GM12878 (cell line): ENCODE measurements at regions of chr12 and their contacts with region 1.

Region 1: DNA sequence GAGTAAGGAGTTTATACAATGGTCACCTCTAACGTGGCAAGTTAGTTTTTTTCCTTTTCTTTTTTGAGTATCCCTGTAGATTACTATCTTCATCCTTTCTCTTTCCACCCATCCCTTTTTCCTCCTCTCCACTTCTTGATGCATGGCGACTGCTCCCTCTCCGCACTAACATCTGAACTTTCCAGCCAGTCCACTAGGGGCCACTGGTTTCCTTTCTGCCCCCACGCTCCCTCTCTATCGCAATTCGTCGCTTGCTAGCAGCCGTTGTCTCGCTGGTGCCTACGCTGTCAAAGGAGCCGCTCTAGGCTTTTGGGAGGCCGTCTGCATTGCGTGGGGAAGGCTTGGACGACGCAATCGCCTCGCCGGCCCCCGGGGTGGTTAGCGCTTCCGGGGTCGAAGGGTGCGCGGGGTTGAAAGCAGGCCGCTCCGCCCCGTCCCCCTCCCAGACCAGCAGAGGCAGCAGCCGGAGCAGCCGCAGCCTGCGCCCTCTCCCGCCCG is at the start of gene PCBP2:
- DNase-seq: peak; percentile 96
- ATAC-seq: peak; percentile 97
- H3K4me3 ChIP-seq: peak within 1 kb of the TSS; percentile 97
- H3K27ac ChIP-seq: peak within 1 kb of the TSS; percentile 92
- H3K4me1 ChIP-seq: peaks cover 5% of the 10 kb centered on the region
- H3K27me3 ChIP-seq: no peaks in the 10 kb centered on the region
- CTCF ChIP-seq: peak; percentile 92 to 97 (median 95)
- EP300 ChIP-seq: peak in 1 of 2 experiments; percentile 21; a peak in 1 of 4 replicates
- POLR2A ChIP-seq: peak; percentile 91
- RAD21 ChIP-seq: no peak
- polyA plus RNA-seq, gene PCBP2: 318 to 348 TPM

Region 2: DNA sequence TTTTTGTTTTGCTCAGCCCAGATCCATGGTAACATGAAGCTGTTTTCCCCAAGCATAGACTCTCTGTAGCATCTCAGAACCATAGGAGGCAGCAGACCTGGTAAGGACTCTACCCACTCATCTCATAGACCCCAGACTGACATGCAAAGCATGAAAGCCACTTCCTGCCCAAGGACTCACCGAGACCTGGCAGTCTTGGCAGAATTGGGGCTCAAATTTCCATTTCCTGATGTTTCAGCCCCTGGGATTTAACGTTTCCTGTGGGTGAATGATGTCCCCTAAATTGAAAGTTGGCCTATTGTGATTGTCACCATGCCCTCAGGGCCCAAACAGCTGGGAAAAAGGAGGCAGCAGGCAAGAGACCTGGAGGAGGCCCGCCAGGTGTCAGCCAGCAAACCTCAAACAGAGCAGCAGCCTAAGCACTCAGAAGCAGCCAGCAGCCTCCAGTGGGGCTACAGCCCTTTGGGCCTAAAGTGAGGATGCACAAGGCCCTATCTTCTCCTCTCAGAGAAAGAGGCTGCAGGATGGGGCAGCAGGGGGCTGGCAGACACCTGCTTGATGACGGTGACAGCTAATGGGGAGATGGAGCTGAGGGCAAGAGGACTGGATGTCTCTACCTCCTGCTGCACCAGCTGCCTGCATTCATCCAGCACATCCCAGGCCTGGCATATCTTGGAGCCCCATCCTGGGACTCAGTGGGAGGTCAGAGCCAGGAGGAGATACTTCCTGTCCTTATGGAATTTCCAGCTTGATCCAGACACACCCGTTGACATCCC is 1092.9 kb before region 1 on chr12:
- CTCF ChIA-PET with region 1: no interaction called
- POLR2A ChIA-PET with region 1: no interaction called
- RAD21 ChIA-PET with region 1: no interaction called
- SMC1A ChIA-PET with region 1: no interaction called
- in situ Hi-C with region 1: no loop called
- intact Hi-C with region 1: no loop called
- DNase-seq: peak; percentile 34
- ATAC-seq: peak; percentile 97
- H3K4me3 ChIP-seq: no peak overlapping the region
- H3K27ac ChIP-seq: no peak overlapping the region
- H3K4me1 ChIP-seq: peaks cover 12% of the 10 kb centered on the region
- H3K27me3 ChIP-seq: 0 out of 4 replicates have a peak, but pooled peaks cover 0 to 3% of the 10 kb centered on the region in 2 experiments
- CTCF ChIP-seq: peak in 2 of 3 experiments; percentile 12 to 27; a peak in 2 of 6 replicates
- EP300 ChIP-seq: no peak
- POLR2A ChIP-seq: no peak
- RAD21 ChIP-seq: no peak

Region 3: GRCh38 chr12:53054112-53054833 is 397.4 kb before region 1 on chr12:
- CTCF ChIA-PET with region 1: no interaction called
- POLR2A ChIA-PET with region 1: no interaction called
- RAD21 ChIA-PET with region 1: no interaction called
- SMC1A ChIA-PET with region 1: no interaction called
- in situ Hi-C with region 1: no loop called
- intact Hi-C with region 1: no loop called
- DNase-seq: peak; percentile 61
- ATAC-seq: peak; percentile 92
- H3K4me3 ChIP-seq: peak overlapping the region; percentile 80
- H3K27ac ChIP-seq: no peak overlapping the region
- H3K4me1 ChIP-seq: peaks cover 8% of the 10 kb centered on the region
- H3K27me3 ChIP-seq: no peaks in the 10 kb centered on the region
- CTCF ChIP-seq: peak in 1 of 3 experiments; percentile 4; a peak in 1 of 6 replicates
- EP300 ChIP-seq: no peak
- POLR2A ChIP-seq: peak; percentile 67; the same call in 1 of the 2 replicates
- RAD21 ChIP-seq: no peak

Region 4: DNA sequence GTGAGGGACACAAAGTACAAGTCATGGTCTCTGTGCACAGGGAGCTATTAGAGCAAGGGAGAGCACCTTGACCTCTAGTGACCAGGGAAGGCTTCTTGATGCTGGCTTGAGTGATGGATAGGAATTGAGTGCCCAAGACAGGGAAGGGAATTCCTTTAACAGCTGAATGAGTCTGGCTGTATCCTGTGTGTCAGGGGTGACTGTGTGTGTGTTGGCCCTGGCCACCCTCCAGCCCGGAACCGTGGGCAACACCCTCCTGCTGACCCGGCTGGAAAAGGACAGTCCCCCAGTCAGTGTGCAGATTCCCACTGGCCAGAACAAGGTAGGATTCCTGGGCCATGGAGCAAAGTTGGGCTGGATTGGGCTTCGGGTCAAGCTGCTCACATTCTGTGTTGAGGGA is 161.8 kb before region 1 on chr12:
- CTCF ChIA-PET with region 1: no interaction called
- POLR2A ChIA-PET with region 1: no interaction called
- RAD21 ChIA-PET with region 1: no interaction called
- SMC1A ChIA-PET with region 1: no interaction called
- in situ Hi-C with region 1: no loop called
- intact Hi-C with region 1: no loop called
- DNase-seq: no peak
- ATAC-seq: no peak
- H3K4me3 ChIP-seq: no peak overlapping the region
- H3K27ac ChIP-seq: no peak overlapping the region
- H3K4me1 ChIP-seq: no peaks in the 10 kb centered on the region; the same call in 1 of the 2 replicates
- H3K27me3 ChIP-seq: no peaks in the 10 kb centered on the region
- CTCF ChIP-seq: no peak
- EP300 ChIP-seq: no peak
- POLR2A ChIP-seq: no peak
- RAD21 ChIP-seq: no peak

Region 5: GRCh38 chr12:53500776-53501614 is 49.3 kb after region 1 on chr12 and contains the start of gene TARBP2:
- CTCF ChIA-PET with region 1: interaction called, 6 read pairs
- POLR2A ChIA-PET with region 1: interaction called, 4 read pairs
- RAD21 ChIA-PET with region 1: interaction called, 4 read pairs
- SMC1A ChIA-PET with region 1: no interaction called
- in situ Hi-C with region 1: no loop called
- intact Hi-C with region 1: loop called (anchors 5 kb)
- DNase-seq: peak; percentile 98
- ATAC-seq: peak; percentile 84
- H3K4me3 ChIP-seq: peak within 1 kb of the TSS; percentile 76
- H3K27ac ChIP-seq: peak within 1 kb of the TSS; percentile 95
- H3K4me1 ChIP-seq: peaks cover 13% of the 10 kb centered on the region
- H3K27me3 ChIP-seq: no peaks in the 10 kb centered on the region
- CTCF ChIP-seq: no peak
- EP300 ChIP-seq: peak in 1 of 2 experiments; percentile 38; a peak in 1 of 4 replicates
- POLR2A ChIP-seq: peak; percentile 94
- RAD21 ChIP-seq: no peak
- polyA plus RNA-seq, gene TARBP2: 5.5 to 9.4 TPM